Testis (tissue), 5 donors: ENCODE measurements at regions of chr1 and their contacts with region 1.

Region 1: DNA sequence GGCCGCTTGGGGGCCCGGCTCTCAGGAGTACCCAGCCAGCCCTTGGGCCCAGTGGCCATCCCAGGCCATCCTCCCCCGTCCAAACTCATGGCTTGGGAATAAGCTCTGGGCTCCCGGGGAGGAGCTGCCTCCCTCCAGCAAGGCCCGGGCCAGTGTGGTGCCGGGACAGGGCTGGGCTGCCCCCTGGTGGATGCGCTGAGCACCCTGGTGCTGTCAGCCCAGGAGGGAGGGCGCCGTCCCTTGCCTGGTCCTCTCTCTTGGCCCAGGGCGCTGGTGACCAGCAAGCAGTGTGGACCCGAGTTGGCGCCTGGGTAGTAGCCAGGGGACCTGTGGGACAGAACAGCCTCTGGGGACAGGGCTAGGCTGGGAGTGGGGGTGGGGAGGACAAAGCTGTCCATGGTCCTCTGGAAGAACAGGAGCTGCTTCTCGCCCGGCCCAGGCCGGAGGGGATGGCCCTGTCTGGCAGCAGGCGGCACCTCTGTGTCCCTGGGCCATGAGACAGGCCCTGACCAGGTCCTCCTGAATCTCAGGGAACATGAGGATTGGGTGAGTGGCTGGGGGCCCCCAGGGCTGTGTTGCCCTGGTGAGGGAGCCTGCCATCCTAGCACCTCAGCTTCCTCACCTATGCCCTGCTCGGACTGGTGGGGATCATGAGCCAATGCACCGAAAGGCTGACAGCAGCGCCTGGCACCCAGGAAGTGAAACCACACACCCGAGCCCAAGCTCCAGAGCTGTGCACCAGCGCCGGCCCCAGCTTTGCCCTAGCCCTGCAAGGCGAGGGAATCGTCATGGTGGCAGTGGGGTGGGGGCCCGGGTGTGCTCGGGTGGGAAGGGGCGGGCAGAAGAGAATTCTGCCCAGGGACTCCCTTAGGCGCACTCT is 9.4 kb downstream of the MORN1 start:
- DNase-seq: peak; percentile 84
- H3K4me3 ChIP-seq: no peak overlapping the region
- H3K27ac ChIP-seq: no peak overlapping the region
- H3K4me1 ChIP-seq: peaks cover 14% of the 10 kb centered on the region
- H3K27me3 ChIP-seq: no peaks in the 10 kb centered on the region
- CTCF ChIP-seq: peak; percentile 91 to 96 (median 95)
- POLR2A ChIP-seq: no peak

Region 2: GRCh38 chr1:2194898-2195673 is 186.9 kb before region 1 on chr1:
- intact Hi-C with region 1: loop called (anchors 5 kb)
- DNase-seq: peak; percentile 89
- H3K4me3 ChIP-seq: peak overlapping the region; percentile 66 to 71
- H3K27ac ChIP-seq: peak overlapping the region; percentile 92 to 93
- H3K4me1 ChIP-seq: peaks cover 46% of the 10 kb centered on the region
- H3K27me3 ChIP-seq: no peaks in the 10 kb centered on the region
- CTCF ChIP-seq: peak; percentile 82 to 90 (median 82)
- POLR2A ChIP-seq: no peak

Region 3: GRCh38 chr1:2330511-2331199 is 51.3 kb before region 1 on chr1:
- intact Hi-C with region 1: loop called (anchors 10 kb)
- DNase-seq: peak; percentile 86
- H3K4me3 ChIP-seq: no peak overlapping the region
- H3K27ac ChIP-seq: peak overlapping the region; percentile 7 to 70
- H3K4me1 ChIP-seq: peaks cover 16% of the 10 kb centered on the region
- H3K27me3 ChIP-seq: no peaks in the 10 kb centered on the region
- CTCF ChIP-seq: no peak
- POLR2A ChIP-seq: no peak

Region 4: GRCh38 chr1:3702990-3703728 is 1321.2 kb after region 1 on chr1:
- intact Hi-C with region 1: no loop called
- DNase-seq: no peak
- H3K4me3 ChIP-seq: no peak overlapping the region
- H3K27ac ChIP-seq: no peak overlapping the region
- H3K4me1 ChIP-seq: no peaks in the 10 kb centered on the region
- H3K27me3 ChIP-seq: no peaks in the 10 kb centered on the region
- CTCF ChIP-seq: no peak
- POLR2A ChIP-seq: no peak